GM13976 (cell line): ENCODE measurements at regions of chr6 and their contacts with region 1.

Region 1: DNA sequence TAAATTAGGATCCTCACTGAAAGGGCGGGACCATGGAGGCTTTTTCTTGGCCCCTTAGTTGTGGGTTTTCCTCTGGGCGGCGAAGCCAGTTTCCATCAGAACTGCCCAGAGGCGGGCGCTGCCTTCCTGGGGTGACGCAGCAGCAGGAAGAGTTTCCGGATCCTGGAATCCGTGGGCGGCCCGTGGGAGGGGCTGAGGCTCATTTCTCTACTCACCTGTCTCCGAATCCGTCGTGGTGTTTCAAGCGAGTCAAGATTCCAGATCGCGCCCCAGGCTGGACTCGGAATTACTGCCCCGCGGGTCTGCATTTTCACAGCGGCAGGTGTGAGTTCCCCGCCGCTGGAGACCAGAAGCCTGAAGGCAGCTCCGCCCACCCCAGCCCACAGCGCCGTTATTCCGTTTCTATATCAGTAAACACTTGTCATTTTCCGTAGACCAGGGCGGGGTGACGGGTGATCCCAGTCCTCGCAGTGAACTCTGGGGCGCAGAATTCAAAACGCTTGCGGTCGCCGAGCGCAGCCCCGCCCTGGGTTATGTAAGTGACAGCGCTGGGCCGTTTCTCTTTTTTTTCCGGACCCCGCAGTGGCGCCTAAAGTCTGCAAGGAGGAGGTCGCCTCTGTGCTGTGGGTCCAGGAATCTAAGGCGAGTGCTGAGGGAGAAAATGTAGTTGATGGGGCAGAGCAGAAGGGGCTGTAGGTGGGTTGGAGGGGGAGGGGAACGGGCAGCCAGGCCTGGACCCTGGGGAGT is 27.2 kb upstream of the POU5F1 start:
- DNase-seq: peak; percentile 75
- CTCF ChIP-seq: no peak

Region 2: GRCh38 chr6:31139599-31139998 is 58.1 kb before region 1 on chr6:
- in situ Hi-C with region 1: loop called (anchors 5 kb)
- DNase-seq: no peak
- CTCF ChIP-seq: no peak

Region 3: DNA sequence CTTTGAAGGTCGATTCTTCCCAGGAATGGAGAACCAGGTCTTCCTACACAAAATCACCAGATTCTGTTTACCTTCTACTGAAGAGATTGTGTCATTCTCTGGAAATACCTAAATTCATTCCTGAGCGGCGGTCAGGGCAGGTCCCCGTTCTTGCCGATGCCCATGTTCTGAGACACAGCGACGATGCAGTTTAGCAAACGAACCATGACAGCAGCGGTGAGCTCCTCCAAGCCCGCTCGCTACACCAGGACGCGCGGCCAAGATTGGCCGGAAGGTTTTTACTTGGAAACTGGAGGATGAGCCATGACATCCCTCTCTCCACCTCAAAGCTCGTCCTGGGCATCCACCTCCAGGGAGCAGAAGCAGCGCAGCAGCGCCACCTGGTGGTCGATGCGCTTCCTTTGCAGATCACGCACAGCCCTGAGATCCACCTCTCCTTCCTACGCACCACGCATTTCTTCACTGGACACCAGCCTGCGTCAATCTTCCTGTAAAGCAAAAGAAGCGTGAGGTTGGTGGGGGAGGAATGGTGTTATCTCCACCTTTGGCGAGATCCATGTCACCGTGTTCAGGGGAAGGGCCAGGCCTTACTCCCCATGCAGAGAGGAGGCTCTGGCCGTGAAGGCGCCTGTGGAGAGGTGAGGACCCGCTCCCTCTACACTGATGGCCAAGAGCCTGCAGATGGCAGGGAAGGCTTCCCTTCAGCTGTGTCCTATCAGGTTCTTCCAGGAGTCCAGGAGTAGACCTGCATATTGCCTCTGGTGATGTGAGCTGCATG is 169.2 kb after region 1 on chr6:
- in situ Hi-C with region 1: loop called (anchors 5 kb)
- DNase-seq: peak; percentile 82
- CTCF ChIP-seq: peak; percentile 85